ENCODE measurements at regions of chr6 and their contacts with region 1.

Region 1: DNA sequence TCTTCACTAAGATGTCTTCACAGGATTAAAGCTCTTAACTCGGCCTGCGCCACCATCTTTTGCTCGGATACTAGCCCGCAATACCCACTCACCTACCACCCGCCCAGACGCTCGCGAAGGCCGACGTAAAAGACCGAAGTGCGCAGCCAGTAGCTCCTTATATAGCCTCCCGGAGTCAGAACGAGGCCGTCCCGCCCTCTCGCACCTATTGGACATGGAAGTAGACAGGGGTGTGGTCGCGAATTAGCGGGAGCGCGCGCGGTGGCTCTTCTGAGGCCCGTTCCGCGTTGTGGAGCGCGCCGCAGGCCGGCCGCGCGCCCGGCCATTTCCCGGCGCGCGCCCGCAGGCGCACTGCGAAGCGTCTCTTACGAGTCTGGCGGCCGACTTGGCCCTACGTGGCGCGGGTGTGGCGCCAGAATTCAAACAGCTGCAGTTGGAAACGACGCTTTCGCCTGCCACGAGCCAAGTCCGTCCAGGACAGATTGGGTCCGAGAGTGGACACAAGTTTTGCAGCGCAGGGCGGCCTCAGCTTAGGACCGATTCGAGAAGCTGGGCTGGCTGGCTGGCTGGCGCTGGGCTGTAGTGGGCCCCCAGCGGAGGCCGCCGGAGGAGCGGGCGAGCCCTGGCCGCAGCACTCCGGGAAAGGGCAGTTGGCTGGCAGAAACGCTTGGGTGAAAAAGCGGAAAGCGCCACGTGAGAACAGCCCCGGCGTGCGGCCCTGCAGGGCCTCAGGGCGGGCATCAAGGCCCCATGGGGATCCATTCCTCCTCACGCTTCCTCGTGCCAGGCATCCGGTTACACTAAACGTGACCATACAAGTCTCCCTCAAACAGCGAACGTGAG is 36.1 kb upstream of the SYNCRIP start:
- DNase-seq: peak; percentile 98
- ATAC-seq: peak; percentile 86
- H3K4me3 Mint-ChIP-seq: peak overlapping the region; percentile 98
- H3K27ac Mint-ChIP-seq: peak overlapping the region; percentile 89
- H3K4me1 Mint-ChIP-seq: peaks cover 52% of the 10 kb centered on the region
- H3K27me3 Mint-ChIP-seq: no peaks in the 10 kb centered on the region

Region 2: DNA sequence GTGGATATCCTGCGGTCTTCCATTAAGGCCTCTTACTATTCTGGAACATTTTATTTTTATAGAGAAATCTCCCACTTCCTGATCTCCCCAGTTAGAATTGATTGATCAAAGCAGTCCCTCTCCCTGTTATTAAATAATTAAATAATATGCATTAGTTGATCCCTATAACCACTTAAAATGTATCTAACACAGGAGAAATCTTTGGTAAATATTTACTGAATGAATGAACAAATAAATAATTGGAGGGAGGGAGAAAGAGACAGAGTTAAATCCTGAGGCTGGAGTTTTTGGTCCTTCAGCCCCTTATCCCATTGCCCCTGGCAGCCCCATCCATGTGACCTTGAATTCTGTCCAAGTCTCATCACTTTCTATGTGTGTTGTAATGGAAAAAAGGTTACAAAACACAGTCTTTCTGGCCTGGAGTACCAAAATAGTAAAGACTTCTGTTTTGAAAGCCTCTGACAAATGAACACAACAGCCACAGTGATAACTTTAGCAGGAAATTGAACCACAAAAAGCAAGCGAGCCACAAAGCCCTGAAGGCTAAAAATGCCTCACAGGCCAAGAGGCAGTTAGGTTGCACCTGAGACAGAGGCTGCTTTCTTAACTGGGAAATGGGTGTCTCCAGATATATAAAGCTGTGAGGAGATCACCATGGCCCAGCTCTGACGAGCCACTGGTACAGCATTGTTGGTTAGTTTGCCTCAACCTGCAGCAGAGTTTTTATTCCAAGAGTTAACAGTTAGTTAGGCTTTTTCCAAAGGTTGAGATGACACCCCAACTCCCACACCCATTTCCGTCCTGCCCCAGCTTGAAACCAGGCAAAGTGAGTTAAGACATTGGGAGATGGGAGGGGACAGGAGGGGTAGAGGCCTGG is 217.7 kb before region 1 on chr6:
- CTCF ChIA-PET with region 1: no interaction called
- POLR2A ChIA-PET with region 1: interaction called, 11 read pairs
- DNase-seq: peak; percentile 83
- ATAC-seq: peak; percentile 73
- H3K4me3 Mint-ChIP-seq: peak overlapping the region; percentile 49
- H3K27ac Mint-ChIP-seq: peak overlapping the region; percentile 85
- H3K4me1 Mint-ChIP-seq: peaks cover 96% of the 10 kb centered on the region
- H3K27me3 Mint-ChIP-seq: no peaks in the 10 kb centered on the region

Region 3: GRCh38 chr6:85620308-85620707 is 58.5 kb before region 1 on chr6:
- CTCF ChIA-PET with region 1: interaction called, 3 read pairs
- POLR2A ChIA-PET with region 1: interaction called, 14 read pairs
- DNase-seq: no peak
- ATAC-seq: no peak
- H3K4me3 Mint-ChIP-seq: no peak overlapping the region
- H3K27ac Mint-ChIP-seq: no peak overlapping the region
- H3K4me1 Mint-ChIP-seq: peaks cover 18% of the 10 kb centered on the region
- H3K27me3 Mint-ChIP-seq: no peaks in the 10 kb centered on the region

Region 4: DNA sequence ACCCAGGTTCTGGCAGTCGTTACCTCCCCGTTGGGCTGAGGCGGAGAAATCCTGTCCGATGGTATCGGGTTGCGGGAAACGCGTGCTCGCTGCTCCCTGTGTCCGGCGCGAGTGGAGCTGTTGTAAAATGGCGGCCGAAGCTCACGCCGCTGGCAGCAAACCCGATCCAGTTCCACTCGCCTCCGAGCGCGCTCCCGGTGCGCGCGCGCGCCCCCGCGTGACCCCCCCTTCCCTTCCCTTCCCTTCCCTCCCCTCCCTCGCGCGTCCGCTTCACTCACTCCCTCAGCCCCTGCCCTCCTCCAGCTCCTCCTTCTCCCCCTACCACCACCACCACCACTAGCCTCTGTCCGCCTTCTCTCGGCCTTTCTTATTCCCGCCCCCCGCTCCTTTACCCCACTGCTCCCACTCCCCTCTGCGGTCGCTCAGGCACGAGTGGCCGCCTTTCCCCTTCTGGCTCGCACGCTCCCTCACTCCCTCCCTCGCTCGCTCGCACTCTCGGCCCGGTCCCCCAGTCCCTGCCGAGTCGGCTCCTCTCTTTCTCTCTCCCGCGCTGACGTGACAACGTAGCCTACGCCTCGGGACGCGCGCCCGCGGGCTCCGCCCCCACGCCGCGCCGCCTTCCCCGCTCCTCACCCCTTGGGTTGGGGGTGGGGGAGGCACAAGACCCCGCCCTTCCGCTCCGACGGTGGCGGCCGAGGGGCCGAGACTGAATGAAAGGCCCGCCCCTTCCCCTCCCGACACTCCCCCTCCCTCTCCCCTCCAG is 35.9 kb before region 1 on chr6 and contains the start of gene SYNCRIP:
- CTCF ChIA-PET with region 1: interaction called, 106 read pairs
- POLR2A ChIA-PET with region 1: interaction called, 501 read pairs
- DNase-seq: peak; percentile 98
- ATAC-seq: peak; percentile 82
- H3K4me3 Mint-ChIP-seq: peak within 1 kb of the TSS; percentile 90
- H3K27ac Mint-ChIP-seq: peak within 1 kb of the TSS; percentile 99
- H3K4me1 Mint-ChIP-seq: peaks cover 38% of the 10 kb centered on the region
- H3K27me3 Mint-ChIP-seq: peaks cover 1% of the 10 kb centered on the region
- total RNA-seq, gene SYNCRIP: 136 to 137 TPM

Measured in activated CD8-positive, alpha-beta T cell treated with anti-CD3 and anti-CD28 coated beads, Interleukin-2, amount 10 ng/mL, durations not matched to agents 7 days and 5 days (primary cell).